CD4-positive, alpha-beta memory T cell (primary cell): ENCODE measurements at regions of chr3 and their contacts with region 1.

Region 1: DNA sequence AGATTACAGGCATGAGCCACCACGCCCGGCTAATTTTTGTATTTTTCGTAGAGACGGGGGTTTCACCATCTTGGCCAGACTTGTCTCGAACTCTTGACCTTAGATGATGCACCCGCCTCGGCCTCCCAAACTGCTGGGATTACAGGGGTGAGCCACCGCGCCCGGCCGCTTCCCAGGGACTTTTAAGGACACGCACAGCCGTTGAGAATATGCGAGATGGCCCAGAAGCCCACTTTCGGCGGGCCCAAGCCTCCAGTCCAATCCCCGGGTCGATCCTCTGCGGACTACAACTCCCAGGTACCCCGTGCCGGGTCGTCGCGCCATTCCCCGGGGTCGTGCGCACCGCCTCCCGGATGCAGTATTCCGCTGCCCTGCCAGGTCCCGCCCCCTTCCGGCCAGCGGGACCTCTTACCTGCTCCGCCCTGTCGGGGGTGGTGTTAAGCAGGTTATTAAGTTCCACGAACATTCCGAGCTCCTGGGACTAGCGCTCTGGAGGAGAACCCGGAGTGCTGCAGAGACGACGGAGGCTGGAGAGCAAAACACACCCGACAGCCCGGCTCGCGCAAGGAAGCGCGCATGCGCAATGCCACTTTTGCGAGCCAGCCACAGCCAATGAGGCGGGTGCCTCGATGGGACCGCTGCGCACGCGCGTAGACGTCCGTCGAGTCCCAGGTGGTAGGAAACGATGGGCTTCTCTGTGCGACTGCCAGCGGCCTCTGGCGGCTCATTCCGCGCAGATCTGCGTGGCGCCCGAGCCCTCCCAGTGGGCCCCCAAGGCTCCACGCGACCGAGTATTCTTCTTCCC is at the start of gene ELP6:
- DNase-seq: peak; percentile 98 to 99 (median 99)
- H3K4me3 ChIP-seq: peak within 1 kb of the TSS; percentile 73 to 96
- H3K4me3 Mint-ChIP-seq: peak within 1 kb of the TSS; percentile 95 to 99 (median 97)
- H3K27ac ChIP-seq: peak within 1 kb of the TSS; percentile 88
- H3K27ac Mint-ChIP-seq: peak within 1 kb of the TSS; percentile 97 to 99 (median 98)
- H3K4me1 ChIP-seq: peaks cover 13% of the 10 kb centered on the region
- H3K4me1 Mint-ChIP-seq: peaks cover 10 to 33% (median 17%) of the 10 kb centered on the region in 4 donors
- H3K27me3 ChIP-seq: no peaks in the 10 kb centered on the region
- H3K27me3 Mint-ChIP-seq: no peaks in the 10 kb centered on the region
- total RNA-seq, gene ELP6: 24.8 to 28.6 TPM

Region 2: DNA sequence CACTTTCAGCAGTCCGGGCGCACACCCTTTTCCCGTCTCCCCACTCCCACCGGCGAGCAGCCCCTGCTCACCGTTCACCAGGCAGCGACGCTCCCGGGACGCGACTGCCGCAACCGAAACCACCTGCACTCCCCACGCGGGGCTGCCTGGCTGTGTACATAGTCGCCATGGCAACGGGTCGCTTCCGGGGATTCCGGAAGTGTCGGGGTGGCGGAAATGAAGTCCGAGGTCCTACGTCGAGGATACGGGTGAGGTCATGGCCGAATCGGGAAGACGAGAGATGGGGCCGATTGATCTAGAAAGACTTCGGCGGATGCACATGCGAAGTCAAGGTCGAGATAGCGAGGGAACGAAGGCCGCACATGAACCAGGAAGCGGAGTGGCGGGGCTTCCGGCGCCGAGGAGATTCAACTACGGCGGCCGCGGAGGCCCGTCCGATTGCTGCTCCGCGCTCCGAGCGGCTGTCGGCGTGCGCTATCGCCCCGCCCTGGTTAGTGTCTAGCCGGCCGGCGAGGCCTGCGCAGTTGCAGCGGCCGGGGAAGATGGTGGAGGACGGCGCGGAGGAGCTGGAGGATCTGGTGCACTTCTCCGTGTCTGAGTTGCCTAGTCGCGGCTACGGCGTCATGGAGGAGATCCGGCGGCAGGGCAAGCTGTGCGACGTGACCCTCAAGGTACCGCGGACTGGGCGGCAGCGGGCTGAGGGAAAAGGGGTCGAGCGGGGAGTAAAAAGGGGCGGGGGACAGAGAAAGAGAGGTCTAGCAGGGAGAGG is 230.7 kb before region 1 on chr3 and contains the starts of genes KIF9 and KLHL18:
- CTCF ChIA-PET with region 1: no interaction called
- POLR2A ChIA-PET with region 1: no interaction called
- intact Hi-C with region 1: loop called (anchors 5 kb)
- DNase-seq: peak; percentile 97 to 98 (median 98)
- H3K4me3 ChIP-seq: peak within 1 kb of the TSS; percentile 94 to 99
- H3K4me3 Mint-ChIP-seq: peak within 1 kb of the TSS; percentile 95 to 100 (median 98)
- H3K27ac ChIP-seq: peak within 1 kb of the TSS; percentile 95
- H3K27ac Mint-ChIP-seq: peak within 1 kb of the TSS; percentile 98 to 100 (median 100)
- H3K4me1 ChIP-seq: peaks cover 40% of the 10 kb centered on the region
- H3K4me1 Mint-ChIP-seq: peaks cover 19 to 54% (median 38%) of the 10 kb centered on the region in 4 donors
- H3K27me3 ChIP-seq: no peaks in the 10 kb centered on the region
- H3K27me3 Mint-ChIP-seq: no peaks in the 10 kb centered on the region
- total RNA-seq, gene KIF9: 2.3 to 3.2 TPM
- total RNA-seq, gene KLHL18: 21.8 to 26.7 TPM

Region 3: GRCh38 chr3:47420511-47421484 is 92.5 kb before region 1 on chr3:
- CTCF ChIA-PET with region 1: interaction called, 4 read pairs
- POLR2A ChIA-PET with region 1: interaction called, 8 read pairs
- intact Hi-C with region 1: loop called (anchors 1 kb)
- DNase-seq: peak; percentile 86 to 91 (median 87)
- H3K4me3 ChIP-seq: peak overlapping the region in 1 of 2 donors; percentile 4
- H3K4me3 Mint-ChIP-seq: peak overlapping the region; percentile 69 to 89 (median 78)
- H3K27ac ChIP-seq: peak overlapping the region; percentile 69
- H3K27ac Mint-ChIP-seq: peak overlapping the region; percentile 98 to 99 (median 99)
- H3K4me1 ChIP-seq: peaks cover 18% of the 10 kb centered on the region
- H3K4me1 Mint-ChIP-seq: peaks cover 8 to 21% (median 12%) of the 10 kb centered on the region in 4 donors
- H3K27me3 ChIP-seq: no peaks in the 10 kb centered on the region
- H3K27me3 Mint-ChIP-seq: no peaks in the 10 kb centered on the region

Region 4: GRCh38 chr3:47781685-47782445 is 268.5 kb after region 1 on chr3 and contains the start of gene SMARCC1:
- CTCF ChIA-PET with region 1: interaction called, 4 read pairs
- POLR2A ChIA-PET with region 1: interaction called, 8 read pairs
- intact Hi-C with region 1: loop called (anchors 1 kb)
- DNase-seq: peak; percentile 95 to 98 (median 98)
- H3K4me3 ChIP-seq: peak within 1 kb of the TSS; percentile 71 to 91
- H3K4me3 Mint-ChIP-seq: peak within 1 kb of the TSS; percentile 92 to 97 (median 94)
- H3K27ac ChIP-seq: peak within 1 kb of the TSS; percentile 96
- H3K27ac Mint-ChIP-seq: peak within 1 kb of the TSS; percentile 95 to 99 (median 99)
- H3K4me1 ChIP-seq: peaks cover 39% of the 10 kb centered on the region
- H3K4me1 Mint-ChIP-seq: peaks cover 16 to 33% (median 21%) of the 10 kb centered on the region in 4 donors
- H3K27me3 ChIP-seq: no peaks in the 10 kb centered on the region
- H3K27me3 Mint-ChIP-seq: no peaks in the 10 kb centered on the region
- total RNA-seq, gene SMARCC1: 85.7 to 101 TPM

Region 5: GRCh38 chr3:47802734-47803477 is 289.6 kb after region 1 on chr3 and contains the start of gene DHX30:
- CTCF ChIA-PET with region 1: no interaction called
- POLR2A ChIA-PET with region 1: interaction called, 4 read pairs
- intact Hi-C with region 1: loop called (anchors 5 kb)
- DNase-seq: peak; percentile 81 to 90 (median 84)
- H3K4me3 ChIP-seq: peak within 1 kb of the TSS; percentile 95 to 97
- H3K4me3 Mint-ChIP-seq: peak within 1 kb of the TSS; percentile 93 to 97 (median 95)
- H3K27ac ChIP-seq: peak within 1 kb of the TSS; percentile 90
- H3K27ac Mint-ChIP-seq: peak within 1 kb of the TSS; percentile 91 to 98 (median 97)
- H3K4me1 ChIP-seq: peaks cover 27% of the 10 kb centered on the region
- H3K4me1 Mint-ChIP-seq: peaks cover 15 to 27% (median 22%) of the 10 kb centered on the region in 4 donors
- H3K27me3 ChIP-seq: no peaks in the 10 kb centered on the region
- H3K27me3 Mint-ChIP-seq: no peaks in the 10 kb centered on the region
- total RNA-seq, gene DHX30: 86.5 to 93.0 TPM